A549 (cell line): ENCODE measurements at regions of chr9 and their contacts with region 1.

Region 1: GRCh38 chr9:123349691-123350480 is 6.1 kb upstream of the CRB2 start:
- DNase-seq: peak; percentile 52 to 88
- ATAC-seq: peak; percentile 60 to 82
- H3K4me3 ChIP-seq: no peak overlapping the region
- H3K27ac ChIP-seq: no peak overlapping the region
- H3K4me1 ChIP-seq: peaks cover 3% of the 10 kb centered on the region; the same call in 2 of the 3 replicates
- CTCF ChIP-seq: peak; percentile 92
- EP300 ChIP-seq: no peak
- POLR2A ChIP-seq: no peak
- RAD21 ChIP-seq: peak; percentile 96 to 99

Region 2: GRCh38 chr9:122835313-122835731 is 514.6 kb before region 1 on chr9:
- CTCF ChIA-PET with region 1: interaction called, 11 read pairs
- POLR2A ChIA-PET with region 1: no interaction called
- DNase-seq: no peak
- ATAC-seq: peak; percentile 69 to 75; a peak in 4 of 6 replicates
- H3K4me3 ChIP-seq: no peak overlapping the region
- H3K27ac ChIP-seq: no peak overlapping the region
- H3K4me1 ChIP-seq: 0 out of 3 replicates have a peak, but pooled peaks cover 6% of the 10 kb centered on the region
- CTCF ChIP-seq: peak; percentile 14; the same call in 1 of the 3 replicates
- EP300 ChIP-seq: no peak
- POLR2A ChIP-seq: no peak
- RAD21 ChIP-seq: peak in 1 of 2 experiments; percentile 51; a peak in 2 of 5 replicates

Region 3: GRCh38 chr9:123081824-123082223 is 268.1 kb before region 1 on chr9:
- CTCF ChIA-PET with region 1: interaction called, 120 read pairs
- POLR2A ChIA-PET with region 1: no interaction called
- DNase-seq: peak; percentile 13 to 41
- ATAC-seq: peak; percentile 73 to 83; a peak in 4 of 6 replicates
- H3K4me3 ChIP-seq: no peak overlapping the region
- H3K27ac ChIP-seq: no peak overlapping the region
- H3K4me1 ChIP-seq: no peaks in the 10 kb centered on the region
- CTCF ChIP-seq: peak; percentile 64
- EP300 ChIP-seq: no peak
- POLR2A ChIP-seq: no peak
- RAD21 ChIP-seq: peak; percentile 66 to 72

Region 4: GRCh38 chr9:123119566-123119965 is 230.3 kb before region 1 on chr9:
- CTCF ChIA-PET with region 1: interaction called, 13 read pairs
- POLR2A ChIA-PET with region 1: no interaction called
- DNase-seq: no peak
- ATAC-seq: no peak
- H3K4me3 ChIP-seq: no peak overlapping the region
- H3K27ac ChIP-seq: no peak overlapping the region
- H3K4me1 ChIP-seq: peaks cover 6% of the 10 kb centered on the region; the same call in 1 of the 3 replicates
- CTCF ChIP-seq: no peak
- EP300 ChIP-seq: no peak
- POLR2A ChIP-seq: no peak
- RAD21 ChIP-seq: no peak

Region 5: GRCh38 chr9:123338710-123339665 is 10.9 kb before region 1 on chr9:
- CTCF ChIA-PET with region 1: interaction called, 84 read pairs
- POLR2A ChIA-PET with region 1: no interaction called
- DNase-seq: no peak
- ATAC-seq: no peak; a peak in 1 of 6 replicates
- H3K4me3 ChIP-seq: no peak overlapping the region
- H3K27ac ChIP-seq: no peak overlapping the region
- H3K4me1 ChIP-seq: no peaks in the 10 kb centered on the region
- CTCF ChIP-seq: no peak
- EP300 ChIP-seq: no peak
- POLR2A ChIP-seq: no peak
- RAD21 ChIP-seq: no peak

Region 6: GRCh38 chr9:123375469-123376132 is 25.7 kb after region 1 on chr9:
- CTCF ChIA-PET with region 1: interaction called, 84 read pairs
- POLR2A ChIA-PET with region 1: no interaction called
- DNase-seq: no peak
- ATAC-seq: peak in 1 of 2 experiments; percentile 10; a peak in 3 of 6 replicates
- H3K4me3 ChIP-seq: no peak overlapping the region
- H3K27ac ChIP-seq: no peak overlapping the region
- H3K4me1 ChIP-seq: no peaks in the 10 kb centered on the region
- CTCF ChIP-seq: no peak
- EP300 ChIP-seq: no peak
- POLR2A ChIP-seq: no peak
- RAD21 ChIP-seq: no peak